ENCODE measurements at regions of chr12 and their contacts with region 1.

Region 1: DNA sequence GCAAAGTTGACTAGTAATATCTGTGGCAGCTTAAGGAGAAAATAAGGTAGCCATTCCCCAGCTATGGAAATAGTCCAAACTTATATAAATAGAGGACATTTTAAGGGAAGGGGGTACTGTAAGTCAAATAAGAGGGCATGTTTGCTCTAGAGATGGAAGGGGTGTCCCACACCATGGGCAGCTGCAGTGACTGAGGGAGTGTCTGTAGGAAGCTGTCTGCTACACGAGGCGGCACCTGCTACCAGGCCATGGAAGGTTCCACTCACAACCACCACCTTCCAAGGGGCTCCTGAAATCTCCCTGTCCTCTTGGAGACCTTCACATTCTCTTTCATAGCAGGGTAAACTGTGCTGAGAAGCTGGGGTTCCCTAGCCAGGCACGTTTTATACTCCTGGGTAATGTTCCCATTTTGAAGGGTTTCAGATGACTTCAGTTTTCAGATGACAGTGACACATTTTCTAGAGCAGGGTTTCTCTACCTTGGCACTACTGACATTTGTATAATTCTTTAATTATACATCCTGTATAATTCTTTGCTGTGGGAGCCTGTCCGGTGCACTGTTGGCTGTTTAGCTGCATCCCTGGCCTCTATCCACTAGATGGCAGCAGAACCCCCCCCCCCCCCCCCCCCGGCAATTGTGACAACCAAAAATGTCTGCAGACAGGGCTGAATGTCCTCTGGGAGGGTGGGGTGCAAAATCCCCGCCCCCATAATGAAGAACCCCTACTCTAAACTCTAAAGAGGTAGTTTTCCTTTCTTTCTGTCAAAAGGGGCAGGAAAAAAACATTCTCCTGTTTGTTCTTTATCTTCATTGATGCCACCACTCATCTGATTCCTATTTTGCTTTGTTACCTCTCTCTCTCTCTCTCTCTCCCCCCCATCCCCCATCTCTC is 11.6 kb upstream of the SMCO2 start:
- DNase-seq: peak; percentile 3 to 55 (median 54)
- ATAC-seq: peak; percentile 78
- H3K4me3 ChIP-seq: no peak overlapping the region
- H3K27ac ChIP-seq: no peak overlapping the region
- H3K4me1 ChIP-seq: no peaks in the 10 kb centered on the region
- H3K27me3 ChIP-seq: no peaks in the 10 kb centered on the region; a peak in 1 of 5 replicates
- CTCF ChIP-seq: peak in 2 of 3 experiments; percentile 45 to 49; a peak in 5 of 6 replicates
- EP300 ChIP-seq: no peak
- POLR2A ChIP-seq: no peak
- RAD21 ChIP-seq: 0 out of 4 replicates have a peak, but pooled peaks of 1 of the 2 experiments have one; percentile 20

Region 2: DNA sequence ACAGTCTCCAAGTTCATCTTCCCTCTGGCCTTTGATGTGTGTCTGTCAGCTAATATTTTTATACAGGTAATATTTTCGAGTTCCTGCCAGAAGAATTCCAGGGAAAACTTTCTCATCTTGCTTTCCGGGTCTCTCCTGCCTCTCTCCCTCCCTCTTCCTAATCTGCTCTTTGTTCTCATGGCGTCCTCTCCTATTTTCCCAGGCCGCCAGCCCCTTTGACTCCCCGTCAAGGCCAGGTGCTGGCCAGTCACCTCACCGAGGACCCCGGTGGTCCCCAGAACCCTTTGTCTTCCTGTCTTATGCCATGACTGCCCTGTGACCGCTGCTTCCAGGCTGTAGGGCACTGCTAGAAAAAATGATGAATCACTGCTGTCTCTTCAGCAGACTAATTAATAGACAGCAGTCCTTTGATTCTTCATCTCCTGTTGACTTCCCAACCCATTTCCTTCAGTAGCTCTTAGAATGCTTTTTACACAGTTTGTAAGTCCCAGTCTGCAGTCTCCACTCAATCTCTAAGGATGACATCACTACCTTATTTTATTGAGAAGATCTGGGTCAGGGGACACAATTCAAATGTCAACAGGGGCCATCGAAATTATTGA is 129.8 kb after region 1 on chr12:
- CTCF ChIA-PET with region 1: no interaction called
- POLR2A ChIA-PET with region 1: no interaction called
- in situ Hi-C with region 1: no loop called
- intact Hi-C with region 1: loop called (anchors 10 kb)
- DNase-seq: no peak
- ATAC-seq: no peak
- H3K4me3 ChIP-seq: no peak overlapping the region
- H3K27ac ChIP-seq: no peak overlapping the region
- H3K4me1 ChIP-seq: no peaks in the 10 kb centered on the region
- H3K27me3 ChIP-seq: no peaks in the 10 kb centered on the region; a peak in 2 of 5 replicates
- CTCF ChIP-seq: no peak
- EP300 ChIP-seq: no peak
- POLR2A ChIP-seq: no peak
- RAD21 ChIP-seq: no peak

Region 3: GRCh38 chr12:27635349-27635972 is 200.5 kb after region 1 on chr12:
- CTCF ChIA-PET with region 1: no interaction called
- POLR2A ChIA-PET with region 1: no interaction called
- in situ Hi-C with region 1: no loop called
- intact Hi-C with region 1: loop called (anchors 1 kb)
- DNase-seq: peak in 2 of 4 experiments; percentile 18 to 21
- ATAC-seq: peak; percentile 42; the same call in 1 of the 3 replicates
- H3K4me3 ChIP-seq: no peak overlapping the region
- H3K27ac ChIP-seq: no peak overlapping the region
- H3K4me1 ChIP-seq: no peaks in the 10 kb centered on the region
- H3K27me3 ChIP-seq: peaks cover 0 to 5% of the 10 kb centered on the region in 2 experiments; a peak in 1 of 5 replicates
- CTCF ChIP-seq: peak; percentile 34 to 67 (median 42); a peak in 4 of 6 replicates
- EP300 ChIP-seq: no peak
- POLR2A ChIP-seq: no peak
- RAD21 ChIP-seq: peak; percentile 64 to 76

Region 4: DNA sequence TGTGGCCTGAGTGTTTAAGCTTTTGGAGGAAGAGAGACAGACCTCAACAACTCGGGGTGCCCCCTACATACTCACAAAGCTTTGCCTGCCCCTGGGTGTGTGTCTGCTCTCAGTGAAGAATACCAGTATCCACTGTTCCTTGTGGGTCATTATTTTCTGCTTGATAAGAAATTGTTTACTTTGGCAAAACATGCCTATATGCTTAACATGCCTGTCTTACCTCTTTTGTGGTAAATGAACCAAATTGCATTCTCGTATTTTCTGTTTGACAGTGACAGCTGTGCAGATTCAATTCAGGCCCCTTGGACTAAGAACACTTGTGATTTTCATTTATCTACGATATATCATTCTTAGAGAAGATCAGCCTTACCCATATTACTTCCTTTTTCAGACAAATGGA is 210.8 kb after region 1 on chr12:
- CTCF ChIA-PET with region 1: no interaction called
- POLR2A ChIA-PET with region 1: no interaction called
- in situ Hi-C with region 1: loop called (anchors 5 kb)
- intact Hi-C with region 1: no loop called
- DNase-seq: no peak
- ATAC-seq: no peak
- H3K4me3 ChIP-seq: no peak overlapping the region
- H3K27ac ChIP-seq: no peak overlapping the region
- H3K4me1 ChIP-seq: no peaks in the 10 kb centered on the region
- H3K27me3 ChIP-seq: no peaks in the 10 kb centered on the region
- CTCF ChIP-seq: no peak
- EP300 ChIP-seq: no peak
- POLR2A ChIP-seq: no peak
- RAD21 ChIP-seq: no peak

Region 5: DNA sequence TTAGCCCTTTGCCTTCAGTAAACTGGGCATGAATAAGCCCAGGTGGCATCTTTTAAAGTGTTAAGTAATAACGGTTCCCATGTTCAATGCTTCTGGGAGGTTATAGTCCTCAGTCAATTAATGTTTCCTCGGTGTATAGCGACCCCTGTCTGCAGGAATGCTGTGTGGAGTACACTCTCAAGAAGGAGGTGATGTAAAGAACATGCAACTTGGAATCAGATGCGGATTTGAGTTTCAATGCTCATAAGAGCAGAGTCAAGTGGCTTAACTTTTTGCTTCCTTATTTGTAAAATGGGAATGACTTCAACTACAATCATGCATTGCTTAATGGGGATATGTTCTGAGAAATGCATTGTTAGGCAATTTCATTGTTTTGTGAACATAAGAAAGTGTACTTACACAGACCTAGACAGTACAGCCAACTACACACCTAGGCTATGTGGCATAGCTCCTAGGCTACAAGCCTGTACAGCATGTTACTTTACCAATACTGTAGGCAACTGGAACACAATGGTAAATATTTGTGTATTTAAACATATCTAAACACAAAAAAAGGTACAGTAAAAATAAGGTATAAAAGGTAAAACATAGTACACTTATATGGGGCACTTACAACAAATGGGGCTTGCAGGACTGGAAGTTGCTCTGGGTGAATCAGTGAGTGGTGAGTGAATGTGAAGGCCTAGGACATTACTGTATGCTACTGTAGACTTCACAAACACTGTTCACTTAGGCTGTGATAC is 269.0 kb after region 1 on chr12:
- CTCF ChIA-PET with region 1: interaction called, 4 read pairs
- POLR2A ChIA-PET with region 1: no interaction called
- in situ Hi-C with region 1: no loop called
- intact Hi-C with region 1: loop called (anchors 1 kb)
- DNase-seq: peak; percentile 47 to 82 (median 58)
- ATAC-seq: peak; percentile 96
- H3K4me3 ChIP-seq: no peak overlapping the region
- H3K27ac ChIP-seq: no peak overlapping the region
- H3K4me1 ChIP-seq: peaks cover 0 to 3% of the 10 kb centered on the region in 2 experiments; a peak in 1 of 5 replicates
- H3K27me3 ChIP-seq: peaks cover 6 to 19% of the 10 kb centered on the region in 2 experiments; a peak in 4 of 5 replicates
- CTCF ChIP-seq: peak; percentile 79 to 91 (median 82)
- EP300 ChIP-seq: peak; percentile 82
- POLR2A ChIP-seq: no peak
- RAD21 ChIP-seq: peak; percentile 78 to 80